ENCODE measurements at regions of chr5 and their contacts with region 1.

Region 1: GRCh38 chr5:151740336-151740942 is 18.0 kb downstream of the ATOX1 start:
- DNase-seq: peak; percentile 56
- ATAC-seq: peak; percentile 61
- H3K4me3 Mint-ChIP-seq: no peak overlapping the region; the same call in 1 of the 2 replicates
- H3K27ac Mint-ChIP-seq: peak overlapping the region; percentile 89
- H3K4me1 Mint-ChIP-seq: peaks cover 17% of the 10 kb centered on the region
- H3K27me3 Mint-ChIP-seq: no peaks in the 10 kb centered on the region
- CTCF ChIP-seq: peak; percentile 92

Region 2: DNA sequence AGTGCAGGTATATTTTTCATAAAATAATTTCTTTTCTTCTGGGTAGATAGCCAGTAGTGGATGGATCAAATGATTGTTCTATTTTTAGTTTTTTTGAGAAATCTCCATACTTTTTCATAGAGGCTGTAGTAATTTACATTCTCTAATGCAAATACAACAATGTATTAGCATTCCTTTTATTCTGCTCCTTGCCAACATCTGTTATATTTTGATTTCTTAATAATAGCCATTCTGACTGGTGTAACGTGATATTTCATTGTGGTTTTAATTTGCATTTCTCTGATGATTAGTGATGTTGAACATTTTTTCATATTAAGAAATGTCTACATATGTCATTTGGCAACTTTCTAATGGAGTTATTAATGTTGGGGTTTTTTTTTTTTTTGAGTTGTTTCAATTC is 365.9 kb before region 1 on chr5:
- CTCF ChIA-PET with region 1: no interaction called
- POLR2A ChIA-PET with region 1: no interaction called
- DNase-seq: no peak
- ATAC-seq: no peak
- H3K4me3 Mint-ChIP-seq: no peak overlapping the region
- H3K27ac Mint-ChIP-seq: no peak overlapping the region
- H3K4me1 Mint-ChIP-seq: no peaks in the 10 kb centered on the region
- H3K27me3 Mint-ChIP-seq: no peaks in the 10 kb centered on the region
- CTCF ChIP-seq: no peak

Region 3: DNA sequence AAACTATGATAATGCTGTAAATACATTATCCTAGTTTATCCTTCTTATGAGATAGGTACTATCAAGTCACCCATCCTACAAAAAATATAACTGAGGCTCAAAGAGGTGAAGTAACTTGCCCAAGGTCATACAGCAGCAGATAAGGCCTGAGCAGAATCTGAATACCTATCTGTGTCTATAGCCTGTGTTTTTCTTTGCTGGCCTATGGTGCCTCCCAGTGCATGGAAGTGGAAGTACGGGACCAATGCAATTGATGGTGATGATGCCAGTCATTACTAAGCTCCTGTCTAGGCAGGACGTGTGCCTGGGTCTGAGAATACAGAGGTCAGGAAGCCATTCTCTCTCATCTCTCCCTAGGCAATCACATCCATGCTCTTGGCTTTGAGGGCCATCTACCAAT is 217.1 kb before region 1 on chr5:
- CTCF ChIA-PET with region 1: interaction called, 26 read pairs
- POLR2A ChIA-PET with region 1: no interaction called
- DNase-seq: peak; percentile 62
- ATAC-seq: peak; percentile 97
- H3K4me3 Mint-ChIP-seq: no peak overlapping the region
- H3K27ac Mint-ChIP-seq: no peak overlapping the region
- H3K4me1 Mint-ChIP-seq: no peaks in the 10 kb centered on the region
- H3K27me3 Mint-ChIP-seq: no peaks in the 10 kb centered on the region
- CTCF ChIP-seq: peak; percentile 47; the same call in 1 of the 2 replicates

Region 4: DNA sequence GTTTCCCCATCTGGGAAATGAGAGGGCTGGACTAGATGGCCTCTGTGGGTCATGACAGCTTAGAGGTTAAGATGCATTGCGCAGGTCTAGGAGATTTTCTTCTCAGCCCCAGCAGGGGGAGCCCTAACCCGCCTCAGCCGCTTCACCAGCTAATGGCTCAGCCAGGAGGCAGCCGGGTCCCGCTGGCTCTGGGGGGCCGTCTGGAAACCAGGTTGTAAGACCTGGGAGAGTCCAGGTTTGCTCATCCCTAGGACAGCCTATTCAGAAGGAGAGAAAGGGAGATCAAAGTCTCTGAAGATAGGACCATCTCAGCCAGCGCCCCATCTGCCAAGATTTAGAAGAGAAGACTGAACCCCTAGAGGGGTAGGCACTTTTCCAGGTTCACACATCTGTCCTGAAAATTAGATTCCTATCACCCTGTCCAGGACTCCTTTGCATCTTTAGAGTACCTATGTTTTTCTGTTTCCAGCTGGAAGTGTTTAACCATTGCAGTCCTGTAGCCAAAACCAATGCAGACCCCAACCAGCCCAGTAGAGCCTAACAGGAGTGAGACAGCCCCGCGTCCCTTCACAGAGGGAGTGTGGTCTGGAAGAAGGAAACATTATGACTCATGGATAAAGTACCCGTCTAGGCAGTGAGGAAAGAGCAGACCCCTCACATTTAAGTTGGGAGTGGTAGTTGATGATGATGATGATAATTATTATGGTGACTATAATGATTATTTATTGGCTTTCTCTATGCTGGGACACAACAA is 81.3 kb before region 1 on chr5:
- CTCF ChIA-PET with region 1: interaction called, 167 read pairs
- POLR2A ChIA-PET with region 1: interaction called, 12 read pairs
- DNase-seq: peak; percentile 94
- ATAC-seq: peak; percentile 97
- H3K4me3 Mint-ChIP-seq: no peak overlapping the region
- H3K27ac Mint-ChIP-seq: no peak overlapping the region
- H3K4me1 Mint-ChIP-seq: peaks cover 12% of the 10 kb centered on the region
- H3K27me3 Mint-ChIP-seq: no peaks in the 10 kb centered on the region
- CTCF ChIP-seq: peak; percentile 68

Region 5: DNA sequence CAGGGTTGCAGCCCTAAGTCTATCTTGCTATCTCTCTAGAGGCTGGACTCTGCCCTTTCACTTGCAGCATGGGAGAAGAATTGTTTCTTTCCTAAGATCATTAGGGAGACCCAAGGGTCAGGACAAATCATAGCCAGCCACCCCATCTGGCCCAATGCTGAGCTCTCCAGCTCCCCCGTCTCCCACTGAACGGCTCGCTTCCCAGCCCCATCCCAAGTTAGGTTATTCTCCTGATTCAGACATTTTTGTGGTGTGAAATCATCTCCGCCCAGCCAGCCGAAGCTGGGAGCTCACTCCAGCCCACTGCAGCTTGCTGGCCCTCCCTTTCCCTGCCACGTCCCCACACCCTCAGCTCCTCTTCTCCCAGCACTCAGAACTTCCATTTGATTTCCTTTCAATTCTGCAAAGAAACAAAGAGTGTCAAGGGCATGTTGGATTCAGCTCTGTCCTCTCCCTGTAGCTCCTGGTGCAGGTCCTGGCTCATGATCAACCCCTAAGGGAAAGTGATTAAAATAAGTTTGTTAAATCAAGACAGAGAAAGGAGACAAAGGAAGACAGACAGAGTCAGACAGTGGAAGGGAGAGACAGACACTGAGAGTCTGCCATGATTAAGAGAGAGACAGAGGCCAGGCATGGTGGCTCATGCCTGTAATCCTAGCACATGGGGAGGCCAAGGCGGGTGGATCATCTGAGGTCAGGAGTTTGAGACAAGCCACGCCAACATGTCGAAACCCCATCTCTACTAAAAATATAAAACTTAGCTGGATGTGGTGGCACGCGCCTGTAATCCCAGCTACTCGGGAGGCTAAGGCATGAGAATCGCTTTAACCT is 41.2 kb before region 1 on chr5:
- CTCF ChIA-PET with region 1: interaction called, 33 read pairs
- POLR2A ChIA-PET with region 1: no interaction called
- DNase-seq: no peak
- ATAC-seq: peak; percentile 20
- H3K4me3 Mint-ChIP-seq: no peak overlapping the region
- H3K27ac Mint-ChIP-seq: peak overlapping the region; percentile 19; the same call in 1 of the 2 replicates
- H3K4me1 Mint-ChIP-seq: peaks cover 28% of the 10 kb centered on the region
- H3K27me3 Mint-ChIP-seq: no peaks in the 10 kb centered on the region; the same call in 1 of the 2 replicates
- CTCF ChIP-seq: no peak

Region 6: DNA sequence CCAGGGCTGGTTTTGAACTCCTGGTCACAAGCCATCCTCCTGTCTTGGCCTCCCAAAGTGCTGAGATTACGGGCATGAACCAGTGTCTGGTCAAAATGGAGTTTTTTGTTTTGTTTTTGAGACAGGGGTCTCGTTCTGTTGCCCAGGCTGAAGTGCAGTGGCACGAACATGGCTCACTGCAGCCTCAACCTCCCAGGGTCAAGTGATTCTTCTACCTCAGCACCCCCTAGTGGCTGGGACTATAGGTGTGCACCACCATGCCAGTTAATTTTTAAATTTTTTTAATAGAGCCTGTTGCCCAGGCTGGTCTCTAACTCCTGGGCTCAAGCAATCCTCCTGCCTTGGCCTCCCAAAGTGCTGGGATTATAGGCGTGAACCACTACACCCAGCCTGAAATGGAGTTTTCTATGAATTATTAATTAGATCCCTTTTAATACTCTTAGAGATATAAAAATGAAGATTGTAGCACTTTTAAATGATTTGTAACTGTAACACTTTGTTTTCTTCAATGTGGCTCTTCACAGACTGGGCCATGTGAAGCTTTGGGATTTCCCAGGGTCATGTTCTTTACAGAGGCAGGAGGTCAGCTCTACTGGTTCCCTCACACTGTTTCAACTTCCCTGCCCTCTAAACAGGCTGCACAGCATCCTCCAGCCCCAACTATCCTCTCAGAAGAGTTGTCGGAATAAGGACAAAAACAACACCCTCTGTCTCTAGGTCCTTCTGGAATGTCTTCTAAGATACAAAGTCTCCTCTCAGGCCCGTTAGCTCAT is 21.0 kb before region 1 on chr5:
- CTCF ChIA-PET with region 1: interaction called, 31 read pairs
- POLR2A ChIA-PET with region 1: no interaction called
- DNase-seq: peak; percentile 43
- ATAC-seq: peak; percentile 79
- H3K4me3 Mint-ChIP-seq: no peak overlapping the region
- H3K27ac Mint-ChIP-seq: no peak overlapping the region
- H3K4me1 Mint-ChIP-seq: peaks cover 15% of the 10 kb centered on the region
- H3K27me3 Mint-ChIP-seq: peaks cover 3% of the 10 kb centered on the region
- CTCF ChIP-seq: peak; percentile 63

Region 7: GRCh38 chr5:151771259-151772028 is 31.0 kb after region 1 on chr5 and contains the start of gene G3BP1:
- CTCF ChIA-PET with region 1: interaction called, 24 read pairs
- POLR2A ChIA-PET with region 1: interaction called, 3 read pairs
- DNase-seq: peak; percentile 100
- ATAC-seq: peak; percentile 86
- H3K4me3 Mint-ChIP-seq: peak within 1 kb of the TSS; percentile 94
- H3K27ac Mint-ChIP-seq: peak within 1 kb of the TSS; percentile 17
- H3K4me1 Mint-ChIP-seq: peaks cover 38% of the 10 kb centered on the region
- H3K27me3 Mint-ChIP-seq: no peaks in the 10 kb centered on the region
- CTCF ChIP-seq: no peak
- total RNA-seq, gene G3BP1: 396 to 413 TPM (median 400 TPM) in 3 replicates

Region 8: GRCh38 chr5:151784141-151784540 is 43.7 kb after region 1 on chr5:
- CTCF ChIA-PET with region 1: no interaction called
- POLR2A ChIA-PET with region 1: no interaction called
- DNase-seq: no peak
- ATAC-seq: no peak
- H3K4me3 Mint-ChIP-seq: no peak overlapping the region
- H3K27ac Mint-ChIP-seq: no peak overlapping the region
- H3K4me1 Mint-ChIP-seq: peaks cover 64% of the 10 kb centered on the region
- H3K27me3 Mint-ChIP-seq: no peaks in the 10 kb centered on the region
- CTCF ChIP-seq: no peak

Region 9: GRCh38 chr5:152046361-152046760 is 305.9 kb after region 1 on chr5:
- CTCF ChIA-PET with region 1: no interaction called
- POLR2A ChIA-PET with region 1: no interaction called
- DNase-seq: no peak
- ATAC-seq: no peak
- H3K4me3 Mint-ChIP-seq: no peak overlapping the region
- H3K27ac Mint-ChIP-seq: no peak overlapping the region
- H3K4me1 Mint-ChIP-seq: peaks cover 12% of the 10 kb centered on the region
- H3K27me3 Mint-ChIP-seq: peaks cover 86% of the 10 kb centered on the region
- CTCF ChIP-seq: no peak